PC-3 (cell line): ENCODE measurements at regions of chr14 and their contacts with region 1.

Region 1: DNA sequence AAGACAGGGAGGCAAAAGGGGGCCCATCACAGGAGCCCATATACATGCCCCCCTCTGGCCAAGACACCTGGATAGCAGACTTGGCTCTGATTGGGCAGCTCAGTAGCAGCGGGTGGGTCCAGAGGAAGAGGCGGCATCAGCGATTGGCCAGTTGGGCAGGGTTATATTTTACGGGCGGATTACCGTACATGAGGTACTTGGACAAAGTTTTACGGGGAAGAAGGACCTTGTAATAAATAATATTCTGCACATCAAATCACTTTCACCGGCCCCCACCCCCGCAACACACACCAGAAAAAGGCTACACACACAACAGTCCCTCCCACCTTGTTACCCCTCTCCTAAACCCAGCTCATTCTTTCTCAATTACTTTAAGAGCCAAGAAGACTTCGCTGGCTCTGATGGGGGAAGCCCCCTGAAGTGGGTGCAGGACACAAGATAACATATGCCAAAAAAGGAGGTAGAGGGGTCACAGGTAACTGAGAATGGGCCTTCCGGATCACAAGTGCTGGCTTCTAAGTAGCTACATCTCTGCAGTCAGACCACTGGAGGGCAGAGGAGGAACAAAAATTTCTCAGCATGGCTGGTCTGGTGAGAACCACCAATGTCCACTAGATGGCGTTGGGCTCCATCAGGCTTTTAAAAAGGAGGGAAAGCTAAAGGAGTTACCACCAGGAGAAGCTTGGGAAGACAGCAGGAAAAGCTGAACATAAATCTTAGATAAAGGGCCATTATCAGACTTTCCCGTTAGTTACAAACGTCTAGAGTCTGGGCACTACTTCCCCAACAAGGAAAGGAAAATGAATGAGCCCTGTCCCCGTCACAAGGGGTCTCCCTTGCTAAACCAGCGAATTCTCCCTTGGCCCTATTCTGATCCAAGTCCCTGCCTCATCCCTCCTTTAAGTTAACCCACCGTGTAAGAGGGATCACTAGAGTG is 11.4 kb upstream of the CDH24 start:
- DNase-seq: peak; percentile 96
- ATAC-seq: peak; percentile 60
- H3K4me3 ChIP-seq: peak overlapping the region; percentile 36
- H3K27ac ChIP-seq: no peak overlapping the region
- H3K4me1 ChIP-seq: peaks cover 46% of the 10 kb centered on the region
- H3K27me3 ChIP-seq: no peaks in the 10 kb centered on the region
- CTCF ChIP-seq: peak; percentile 99

Region 2: GRCh38 chr14:22994762-22995275 is 73.9 kb before region 1 on chr14:
- CTCF ChIA-PET with region 1: interaction called, 10 read pairs
- POLR2A ChIA-PET with region 1: no interaction called
- intact Hi-C with region 1: no loop called
- DNase-seq: peak; percentile 52
- ATAC-seq: peak; percentile 90
- H3K4me3 ChIP-seq: no peak overlapping the region
- H3K27ac ChIP-seq: no peak overlapping the region
- H3K4me1 ChIP-seq: peaks cover 5% of the 10 kb centered on the region; the same call in 1 of the 2 replicates
- H3K27me3 ChIP-seq: no peaks in the 10 kb centered on the region
- CTCF ChIP-seq: peak; percentile 76

Region 3: DNA sequence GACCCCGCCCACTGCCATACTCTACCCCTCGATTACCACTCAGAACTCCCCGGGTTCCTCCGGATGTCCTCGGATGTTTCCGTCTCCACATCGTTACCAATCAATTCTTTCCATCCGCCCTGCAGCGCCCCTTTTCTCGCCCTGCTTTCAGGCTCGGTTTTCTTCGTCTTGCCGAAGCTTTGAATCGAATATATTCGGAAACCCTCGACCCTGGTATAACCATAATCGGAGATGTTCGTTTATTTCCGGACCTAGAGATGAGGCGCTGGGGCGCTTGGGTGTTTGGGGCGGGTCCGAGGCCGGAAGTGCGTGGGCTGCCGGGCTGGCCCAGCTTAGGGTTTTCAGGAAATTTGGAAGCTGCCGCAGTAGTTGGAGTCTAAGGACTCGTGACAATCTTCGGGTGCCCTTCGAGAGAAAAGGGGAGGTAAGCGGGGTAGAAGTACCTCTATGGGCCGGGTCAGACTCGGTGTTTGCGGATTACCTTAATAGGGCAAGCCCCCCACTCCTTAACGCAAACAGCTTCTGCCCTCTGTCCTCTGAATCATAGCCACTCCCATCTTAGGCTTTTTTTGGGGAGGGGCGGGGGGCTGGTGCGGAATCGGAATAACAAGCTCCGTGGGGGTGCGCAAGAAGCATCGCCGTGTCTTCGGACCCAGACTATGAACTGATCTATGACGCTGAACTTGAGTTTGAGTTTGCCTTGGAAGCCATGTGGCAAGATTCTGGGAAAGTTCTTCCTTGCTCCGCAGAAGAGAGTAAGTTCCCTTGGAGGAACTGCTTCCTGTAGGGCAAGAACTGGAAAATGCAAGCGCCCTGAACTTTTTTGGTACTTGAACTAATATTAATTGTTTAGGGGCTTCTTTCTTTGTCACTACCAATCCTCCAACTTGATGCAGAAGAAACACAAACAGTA is 26.7 kb after region 1 on chr14 and contains the start of gene C14orf119:
- CTCF ChIA-PET with region 1: interaction called, 45 read pairs
- POLR2A ChIA-PET with region 1: interaction called, 12 read pairs
- intact Hi-C with region 1: loop called (anchors 2 kb)
- DNase-seq: peak; percentile 99
- ATAC-seq: peak; percentile 88
- H3K4me3 ChIP-seq: peak within 1 kb of the TSS; percentile 95
- H3K27ac ChIP-seq: peak within 1 kb of the TSS; percentile 84
- H3K4me1 ChIP-seq: peaks cover 21% of the 10 kb centered on the region
- H3K27me3 ChIP-seq: no peaks in the 10 kb centered on the region
- CTCF ChIP-seq: no peak
- total RNA-seq, gene C14orf119: 26.7 and 49.6 TPM in 2 replicates

Region 4: GRCh38 chr14:23110579-23111365 is 42.0 kb after region 1 on chr14:
- CTCF ChIA-PET with region 1: interaction called, 31 read pairs
- POLR2A ChIA-PET with region 1: no interaction called
- intact Hi-C with region 1: loop called (anchors 1 kb)
- DNase-seq: no peak
- ATAC-seq: no peak
- H3K4me3 ChIP-seq: no peak overlapping the region
- H3K27ac ChIP-seq: no peak overlapping the region
- H3K4me1 ChIP-seq: peaks cover 20% of the 10 kb centered on the region
- H3K27me3 ChIP-seq: peaks cover 22% of the 10 kb centered on the region
- CTCF ChIP-seq: no peak

Region 5: DNA sequence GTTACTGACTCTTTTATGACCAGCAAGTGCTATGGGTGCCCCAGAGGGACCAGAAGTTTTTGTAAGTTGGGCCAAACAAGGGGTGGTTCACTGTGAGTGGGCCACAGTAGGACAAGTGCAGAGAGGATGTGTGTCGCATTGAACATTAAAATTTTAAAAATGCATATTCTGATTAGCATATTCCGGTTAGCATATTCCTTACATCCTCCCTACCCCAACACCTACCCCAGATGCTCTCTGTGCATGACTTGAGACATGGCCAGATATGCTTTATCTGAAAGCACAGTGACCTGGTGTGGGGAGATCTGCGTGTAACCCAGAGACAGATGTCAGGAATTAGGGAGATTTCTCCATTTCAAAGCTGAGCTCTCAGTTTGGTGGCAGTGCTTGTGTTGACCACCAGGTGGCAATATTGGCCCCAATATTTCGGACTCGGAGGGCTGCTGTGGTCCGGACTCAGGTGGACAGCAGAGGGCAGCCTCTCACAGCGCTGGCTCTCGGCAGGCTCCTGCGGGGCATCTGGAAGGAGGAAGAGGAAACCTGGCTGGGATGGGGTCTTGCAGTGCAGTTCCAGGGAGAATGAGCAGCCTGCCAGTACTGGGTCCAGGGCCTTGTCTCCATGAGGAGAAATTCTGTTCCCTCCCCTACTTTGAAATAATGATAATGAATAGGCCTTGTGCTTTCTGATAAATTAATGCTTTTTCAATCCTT is 52.0 kb after region 1 on chr14:
- CTCF ChIA-PET with region 1: interaction called, 13 read pairs
- POLR2A ChIA-PET with region 1: no interaction called
- intact Hi-C with region 1: no loop called
- DNase-seq: peak; percentile 92
- ATAC-seq: peak; percentile 93
- H3K4me3 ChIP-seq: peak overlapping the region; percentile 25; the same call in 1 of the 2 replicates
- H3K27ac ChIP-seq: no peak overlapping the region; the same call in 1 of the 2 replicates
- H3K4me1 ChIP-seq: peaks cover 16% of the 10 kb centered on the region
- H3K27me3 ChIP-seq: no peaks in the 10 kb centered on the region
- CTCF ChIP-seq: peak; percentile 100

Region 6: DNA sequence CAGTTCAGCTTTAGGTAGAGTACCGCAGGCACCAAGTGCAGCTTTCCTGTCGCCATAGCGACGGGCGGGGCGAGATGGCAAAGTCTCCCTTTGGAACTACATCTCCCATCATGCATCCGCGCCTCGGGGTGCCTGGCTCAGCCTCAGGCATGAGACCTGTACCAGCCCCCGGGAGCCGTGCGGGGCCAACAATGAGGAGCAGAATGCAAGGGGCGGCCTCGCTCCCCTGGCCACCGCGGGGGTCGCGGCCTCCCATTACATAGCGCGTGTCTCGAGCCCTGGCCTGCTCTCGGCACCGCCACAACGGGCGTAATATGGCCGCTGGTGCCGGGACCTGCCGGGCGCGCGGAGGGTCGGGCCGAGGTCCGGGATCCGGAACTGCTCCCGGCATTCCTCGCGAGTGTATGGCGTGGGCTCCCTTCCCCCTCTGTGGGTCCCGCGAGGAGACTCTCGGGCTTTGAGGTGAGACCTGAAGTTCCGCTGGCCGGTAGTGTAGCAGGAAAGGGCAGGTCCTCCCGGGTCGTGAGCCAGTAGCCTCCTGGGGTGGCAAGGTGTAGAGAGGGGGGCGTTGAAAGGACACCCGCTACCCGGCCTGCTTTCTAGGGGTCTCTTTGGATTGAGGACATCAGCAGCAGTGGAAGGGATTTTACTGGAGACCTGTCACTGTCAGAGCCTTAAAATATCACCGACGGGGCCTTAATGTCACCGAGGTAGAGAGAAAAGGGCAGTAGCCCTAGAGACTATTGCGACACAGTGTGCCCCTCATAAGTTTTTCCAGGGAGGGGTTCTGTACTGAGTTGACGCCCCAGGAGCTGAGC is 487.3 kb after region 1 on chr14 and contains the start of gene THTPA:
- CTCF ChIA-PET with region 1: no interaction called
- POLR2A ChIA-PET with region 1: no interaction called
- intact Hi-C with region 1: loop called (anchors 10 kb)
- DNase-seq: peak; percentile 90
- ATAC-seq: peak; percentile 75
- H3K4me3 ChIP-seq: peak within 1 kb of the TSS; percentile 85
- H3K27ac ChIP-seq: peak within 1 kb of the TSS; percentile 60
- H3K4me1 ChIP-seq: peaks cover 19% of the 10 kb centered on the region; the same call in 1 of the 2 replicates
- H3K27me3 ChIP-seq: no peaks in the 10 kb centered on the region
- CTCF ChIP-seq: no peak
- total RNA-seq, gene THTPA: 13.0 and 27.2 TPM in 2 replicates